PC-3 (cell line): ENCODE measurements at regions of chr7 and their contacts with region 1.

Region 1: DNA sequence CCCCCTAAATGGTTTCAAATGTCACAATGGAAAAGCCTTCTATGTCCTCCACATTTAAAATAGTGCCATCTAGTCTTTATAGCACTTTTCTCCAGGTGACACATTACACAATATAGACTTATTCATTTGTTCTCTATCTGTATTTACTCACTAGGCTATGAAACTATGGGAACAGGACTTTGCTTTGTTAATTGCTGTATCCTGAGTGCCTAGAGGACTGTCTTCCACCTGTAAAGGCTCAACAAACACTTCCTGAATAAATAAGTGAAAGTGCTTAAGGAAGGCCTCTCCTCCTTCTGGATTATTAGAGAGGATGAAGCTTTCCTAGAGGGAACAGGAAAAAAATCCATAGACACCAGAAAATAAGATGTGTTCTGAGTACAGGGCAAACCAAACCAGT is 397.6 kb upstream of the LRRN3 start:
- DNase-seq: no peak
- ATAC-seq: no peak
- H3K4me3 ChIP-seq: no peak overlapping the region
- H3K27ac ChIP-seq: no peak overlapping the region
- H3K4me1 ChIP-seq: no peaks in the 10 kb centered on the region
- H3K27me3 ChIP-seq: no peaks in the 10 kb centered on the region
- CTCF ChIP-seq: no peak

Region 2: GRCh38 chr7:110808361-110808760 is 115.0 kb after region 1 on chr7:
- CTCF ChIA-PET with region 1: no interaction called
- POLR2A ChIA-PET with region 1: interaction called, 28 read pairs
- intact Hi-C with region 1: no loop called
- DNase-seq: no peak
- ATAC-seq: no peak
- H3K4me3 ChIP-seq: no peak overlapping the region
- H3K27ac ChIP-seq: no peak overlapping the region
- H3K4me1 ChIP-seq: no peaks in the 10 kb centered on the region
- H3K27me3 ChIP-seq: no peaks in the 10 kb centered on the region
- CTCF ChIP-seq: no peak

Region 3: DNA sequence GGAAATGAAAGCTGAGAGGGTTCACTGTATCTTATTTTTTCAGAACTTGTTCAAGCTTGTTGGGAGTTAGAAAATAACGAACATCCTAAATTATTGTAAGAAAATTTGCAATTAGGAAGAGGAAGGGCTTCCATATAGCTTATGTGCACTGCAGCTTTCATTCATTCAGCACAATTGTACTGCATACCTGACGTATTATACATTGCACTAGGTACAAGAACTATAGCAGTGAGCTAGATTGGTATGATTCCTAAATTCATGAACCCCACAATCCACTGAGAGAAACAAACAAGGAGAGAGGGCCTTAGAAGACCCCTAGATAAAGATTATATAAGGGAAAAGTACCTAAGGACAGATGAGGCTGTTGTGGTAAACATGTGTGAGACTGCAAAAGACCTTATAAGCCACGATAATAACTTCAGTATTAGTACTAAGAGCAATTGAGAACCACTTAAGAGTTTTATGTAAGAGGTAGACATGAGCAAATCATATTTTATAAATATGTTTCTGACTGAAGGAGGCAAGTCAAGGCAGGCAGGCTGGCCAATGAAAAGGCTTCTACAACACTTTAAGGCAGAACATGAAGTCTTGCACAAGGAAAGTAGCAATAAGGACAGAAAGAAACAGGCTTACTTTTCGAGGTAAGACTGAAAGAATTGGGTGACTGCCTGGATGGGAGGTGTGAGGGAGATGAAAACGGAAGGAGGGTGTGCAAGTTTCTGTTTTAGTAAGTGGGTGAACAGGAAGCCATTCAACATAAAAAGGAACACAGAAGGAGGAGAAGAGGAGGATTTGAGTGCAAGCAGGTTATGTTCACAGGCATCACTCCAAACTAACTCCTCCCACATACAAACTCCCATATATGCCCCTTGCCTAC is 319.7 kb after region 1 on chr7:
- CTCF ChIA-PET with region 1: no interaction called
- POLR2A ChIA-PET with region 1: no interaction called
- intact Hi-C with region 1: no loop called
- DNase-seq: no peak
- ATAC-seq: no peak
- H3K4me3 ChIP-seq: no peak overlapping the region
- H3K27ac ChIP-seq: no peak overlapping the region
- H3K4me1 ChIP-seq: peaks cover 24% of the 10 kb centered on the region
- H3K27me3 ChIP-seq: no peaks in the 10 kb centered on the region
- CTCF ChIP-seq: no peak